Transverse colon (tissue), 4 donors: ENCODE measurements at regions of chr7 and their contacts with region 1.

Region 1: GRCh38 chr7:131107337-131108211 is 220.1 kb upstream of the MKLN1 start:
- DNase-seq: peak; percentile 78
- H3K4me3 ChIP-seq: peak overlapping the region; percentile 69 to 92 (median 80)
- H3K27ac ChIP-seq: peak overlapping the region; percentile 92 to 97 (median 94)
- H3K4me1 ChIP-seq: peaks cover 4 to 62% (median 32%) of the 10 kb centered on the region in 4 donors
- H3K27me3 ChIP-seq: peaks cover 10% of the 10 kb centered on the region
- CTCF ChIP-seq: no peak
- EP300 ChIP-seq: no peak
- POLR2A ChIP-seq: peak; percentile 94

Region 2: GRCh38 chr7:129739427-129739826 is 1368.1 kb before region 1 on chr7:
- in situ Hi-C with region 1: no loop called
- intact Hi-C with region 1: loop called (anchors 10 kb)
- DNase-seq: no peak
- H3K4me3 ChIP-seq: no peak overlapping the region
- H3K27ac ChIP-seq: no peak overlapping the region
- H3K4me1 ChIP-seq: peaks cover 0 to 6% (median 0%) of the 10 kb centered on the region in 4 donors
- H3K27me3 ChIP-seq: no peaks in the 10 kb centered on the region
- CTCF ChIP-seq: no peak
- EP300 ChIP-seq: no peak
- POLR2A ChIP-seq: no peak

Region 3: GRCh38 chr7:130733931-130734814 is 373.4 kb before region 1 on chr7 and contains the start of gene KLF14:
- in situ Hi-C with region 1: no loop called
- intact Hi-C with region 1: no loop called
- DNase-seq: peak; percentile 17
- H3K4me3 ChIP-seq: peak within 1 kb of the TSS; percentile 22 to 65 (median 52)
- H3K27ac ChIP-seq: peak within 1 kb of the TSS in 3 of 4 donors; percentile 12 to 47 (median 46)
- H3K4me1 ChIP-seq: peaks cover 0 to 13% (median 6%) of the 10 kb centered on the region in 4 donors
- H3K27me3 ChIP-seq: peaks cover 98% of the 10 kb centered on the region
- CTCF ChIP-seq: no peak
- EP300 ChIP-seq: no peak
- POLR2A ChIP-seq: no peak
- total RNA-seq, gene KLF14: 3.0 TPM in 1 of 4 donors, not detected in the others

Region 4: GRCh38 chr7:131302876-131303707 is 195.5 kb after region 1 on chr7:
- in situ Hi-C with region 1: loop called in 1 of 4 experiments (anchors 25 kb)
- intact Hi-C with region 1: no loop called
- DNase-seq: peak; percentile 43
- H3K4me3 ChIP-seq: no peak overlapping the region
- H3K27ac ChIP-seq: no peak overlapping the region
- H3K4me1 ChIP-seq: peaks cover 0 to 4% (median 0%) of the 10 kb centered on the region in 4 donors
- H3K27me3 ChIP-seq: no peaks in the 10 kb centered on the region
- CTCF ChIP-seq: peak; percentile 42 to 47 (median 46)
- EP300 ChIP-seq: no peak
- POLR2A ChIP-seq: no peak

Region 5: GRCh38 chr7:131424219-131424822 is 316.7 kb after region 1 on chr7:
- in situ Hi-C with region 1: loop called in 1 of 4 experiments (anchors 25 kb)
- intact Hi-C with region 1: no loop called
- DNase-seq: no peak
- H3K4me3 ChIP-seq: no peak overlapping the region
- H3K27ac ChIP-seq: no peak overlapping the region
- H3K4me1 ChIP-seq: peaks cover 0 to 23% (median 0%) of the 10 kb centered on the region in 4 donors
- H3K27me3 ChIP-seq: no peaks in the 10 kb centered on the region
- CTCF ChIP-seq: peak; percentile 48 to 63 (median 56)
- EP300 ChIP-seq: no peak
- POLR2A ChIP-seq: no peak

Region 6: GRCh38 chr7:132580717-132581285 is 1473.2 kb after region 1 on chr7:
- in situ Hi-C with region 1: no loop called
- intact Hi-C with region 1: loop called (anchors 5 kb)
- DNase-seq: peak; percentile 77
- H3K4me3 ChIP-seq: no peak overlapping the region
- H3K27ac ChIP-seq: no peak overlapping the region
- H3K4me1 ChIP-seq: peaks cover 7 to 15% (median 10%) of the 10 kb centered on the region in 4 donors
- H3K27me3 ChIP-seq: peaks cover 31% of the 10 kb centered on the region
- CTCF ChIP-seq: peak; percentile 71 to 84 (median 78)
- EP300 ChIP-seq: no peak
- POLR2A ChIP-seq: no peak